SK-N-SH (cell line): ENCODE measurements at regions of chr18 and their contacts with region 1.

Region 1: DNA sequence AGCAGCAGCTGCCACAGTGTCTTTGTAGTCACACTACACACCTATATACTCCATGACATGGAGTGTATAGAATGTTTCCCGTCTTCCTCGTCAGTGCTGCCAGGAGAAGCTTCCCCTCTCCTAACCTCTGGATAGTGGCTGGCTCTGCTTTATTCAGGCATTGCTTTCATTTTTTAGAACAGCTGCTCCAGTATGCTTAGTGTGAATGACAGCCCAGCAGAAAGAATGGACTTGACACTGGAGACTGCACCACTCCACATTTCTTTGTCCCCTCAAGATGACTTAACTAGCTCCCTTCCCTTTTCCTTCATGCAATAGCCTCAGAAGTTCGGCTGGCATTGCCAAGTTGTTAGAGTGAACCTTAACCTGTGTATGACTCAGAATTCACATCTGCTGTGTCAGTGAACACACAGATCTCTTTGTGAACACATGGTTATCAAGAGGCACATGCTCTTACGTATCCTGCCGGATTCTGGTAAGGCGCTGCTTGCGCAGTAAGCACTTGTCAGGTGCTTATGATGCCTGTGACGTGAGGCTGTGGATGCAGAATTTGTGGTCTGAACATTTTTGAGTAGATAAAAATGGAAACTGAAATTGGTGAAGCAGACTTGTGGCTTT is 73.9 kb downstream of the NEDD4L start:
- DNase-seq: no peak
- H3K4me3 ChIP-seq: no peak overlapping the region
- H3K27ac ChIP-seq: no peak overlapping the region
- H3K4me1 ChIP-seq: peaks cover 0 to 15% of the 10 kb centered on the region in 2 experiments; a peak in 2 of 4 replicates
- H3K27me3 ChIP-seq: no peaks in the 10 kb centered on the region
- CTCF ChIP-seq: no peak
- EP300 ChIP-seq: no peak
- RAD21 ChIP-seq: no peak

Region 2: DNA sequence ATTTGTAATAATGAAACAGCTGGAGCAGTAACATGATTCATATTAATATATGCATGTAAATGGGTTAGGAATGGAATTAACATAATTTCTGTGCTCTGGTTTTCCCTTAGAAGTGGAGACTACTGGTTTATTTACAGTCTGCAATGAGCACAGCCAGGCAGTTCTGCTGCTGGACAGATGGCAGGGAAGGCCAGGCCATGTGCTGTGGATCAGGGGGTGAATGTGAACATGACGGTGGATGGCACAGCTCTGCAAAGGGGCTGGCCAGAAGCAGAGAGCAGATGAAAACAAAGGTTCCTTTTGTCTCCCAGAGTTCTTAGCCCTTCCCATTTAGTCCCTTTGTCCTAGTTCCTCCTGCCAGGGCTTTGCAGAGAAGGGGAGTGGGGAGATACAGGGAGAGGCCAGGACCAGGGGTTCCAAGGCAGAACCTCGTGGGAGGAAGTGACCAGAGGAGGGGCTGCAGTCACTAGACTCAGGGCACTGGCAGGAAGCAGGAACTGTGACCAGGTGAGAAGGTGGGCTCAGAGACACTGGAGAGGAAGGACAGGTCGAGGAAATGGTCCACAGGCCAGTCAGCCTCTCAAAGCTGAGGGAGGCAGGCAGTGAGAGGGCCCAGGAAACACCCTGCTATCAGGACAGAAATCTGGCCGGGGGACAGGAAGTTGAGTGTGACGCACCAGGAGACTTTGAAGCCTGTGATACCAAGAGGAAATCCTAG is 201.9 kb before region 1 on chr18:
- CTCF ChIA-PET with region 1: interaction called, 11 read pairs
- POLR2A ChIA-PET with region 1: no interaction called
- DNase-seq: peak; percentile 52
- H3K4me3 ChIP-seq: no peak overlapping the region
- H3K27ac ChIP-seq: peak overlapping the region in 1 of 2 experiments; percentile 51; a peak in 1 of 4 replicates
- H3K4me1 ChIP-seq: peaks cover 11 to 13% of the 10 kb centered on the region in 2 experiments; a peak in 3 of 4 replicates
- H3K27me3 ChIP-seq: no peaks in the 10 kb centered on the region
- CTCF ChIP-seq: no peak
- EP300 ChIP-seq: peak in 1 of 2 experiments; percentile 48; a peak in 1 of 4 replicates
- RAD21 ChIP-seq: no peak

Region 3: GRCh38 chr18:58038063-58038462 is 79.8 kb before region 1 on chr18:
- CTCF ChIA-PET with region 1: interaction called, 99 read pairs
- POLR2A ChIA-PET with region 1: no interaction called
- DNase-seq: no peak
- H3K4me3 ChIP-seq: no peak overlapping the region
- H3K27ac ChIP-seq: no peak overlapping the region
- H3K4me1 ChIP-seq: peaks cover 0 to 2% of the 10 kb centered on the region in 2 experiments; a peak in 1 of 4 replicates
- H3K27me3 ChIP-seq: peaks cover 11% of the 10 kb centered on the region; the same call in 1 of the 2 replicates
- CTCF ChIP-seq: no peak
- EP300 ChIP-seq: no peak
- RAD21 ChIP-seq: no peak

Region 4: GRCh38 chr18:58051765-58052460 is 66.0 kb before region 1 on chr18:
- CTCF ChIA-PET with region 1: interaction called, 37 read pairs
- POLR2A ChIA-PET with region 1: no interaction called
- DNase-seq: no peak
- H3K4me3 ChIP-seq: no peak overlapping the region
- H3K27ac ChIP-seq: no peak overlapping the region
- H3K4me1 ChIP-seq: peaks cover 2 to 8% of the 10 kb centered on the region in 2 experiments; a peak in 2 of 4 replicates
- H3K27me3 ChIP-seq: no peaks in the 10 kb centered on the region
- CTCF ChIP-seq: peak; percentile 55
- EP300 ChIP-seq: no peak
- RAD21 ChIP-seq: peak; percentile 62

Region 5: DNA sequence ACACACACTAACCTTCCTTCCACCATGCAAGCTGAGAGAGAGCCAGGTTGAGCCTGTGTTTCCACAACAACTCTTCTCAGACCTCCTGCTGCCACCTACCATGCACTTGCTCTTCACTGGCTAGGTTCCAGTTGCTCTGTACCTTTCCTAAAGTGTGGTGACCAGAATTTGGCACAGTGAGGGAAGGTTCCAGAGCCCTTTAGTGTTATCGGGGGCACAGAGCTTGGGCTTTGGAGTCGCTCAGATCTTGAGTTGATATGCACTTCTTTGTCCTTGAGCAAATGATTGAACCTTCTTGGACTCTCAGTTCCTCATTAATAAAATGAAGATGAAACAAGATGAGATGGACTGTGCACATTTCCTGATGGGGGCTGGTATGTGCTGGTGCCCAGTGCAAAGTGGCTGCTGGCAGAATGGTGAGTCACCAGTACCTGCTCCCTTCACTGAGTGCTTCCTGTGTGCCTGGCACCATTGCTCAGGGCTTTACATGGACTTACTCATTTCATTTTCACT is 26.7 kb before region 1 on chr18:
- CTCF ChIA-PET with region 1: interaction called, 10 read pairs
- POLR2A ChIA-PET with region 1: no interaction called
- DNase-seq: no peak
- H3K4me3 ChIP-seq: no peak overlapping the region
- H3K27ac ChIP-seq: no peak overlapping the region
- H3K4me1 ChIP-seq: no peaks in the 10 kb centered on the region
- H3K27me3 ChIP-seq: no peaks in the 10 kb centered on the region
- CTCF ChIP-seq: no peak
- EP300 ChIP-seq: no peak
- RAD21 ChIP-seq: no peak

Region 6: DNA sequence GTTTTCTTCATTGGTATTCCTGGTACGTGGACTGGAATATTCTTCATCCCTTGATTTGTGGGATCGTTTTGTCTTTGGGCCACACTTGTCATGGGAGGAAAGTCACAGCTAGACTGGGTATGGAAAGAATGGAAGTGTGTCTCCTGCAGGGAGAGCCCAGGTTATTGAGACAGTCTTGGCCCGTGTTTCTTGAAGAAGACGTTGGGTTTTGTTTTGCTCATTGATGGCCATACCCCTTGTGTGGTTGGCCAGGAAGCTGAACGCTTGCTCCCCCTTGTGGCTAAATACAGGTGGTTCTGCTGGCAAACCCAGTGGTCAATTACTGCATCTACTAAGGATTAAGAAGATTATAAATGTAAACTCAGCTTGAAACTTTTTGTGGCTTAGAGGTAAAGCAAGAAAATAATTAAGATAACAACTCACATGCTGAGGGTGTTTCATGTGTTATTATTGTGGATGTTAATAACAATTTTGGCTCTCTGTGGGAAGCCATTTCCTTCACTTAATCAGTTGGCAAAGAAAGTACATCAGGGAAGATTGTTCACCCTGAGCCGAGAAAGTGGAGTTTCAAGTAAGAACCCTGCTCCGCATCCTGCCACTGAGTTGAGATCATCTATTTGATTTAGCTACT is 17.9 kb after region 1 on chr18:
- CTCF ChIA-PET with region 1: interaction called, 51 read pairs
- POLR2A ChIA-PET with region 1: no interaction called
- DNase-seq: peak; percentile 76
- H3K4me3 ChIP-seq: peak overlapping the region in 1 of 2 experiments; percentile 5; a peak in 1 of 4 replicates
- H3K27ac ChIP-seq: no peak overlapping the region
- H3K4me1 ChIP-seq: no peaks in the 10 kb centered on the region; a peak in 1 of 4 replicates
- H3K27me3 ChIP-seq: no peaks in the 10 kb centered on the region
- CTCF ChIP-seq: peak; percentile 89
- EP300 ChIP-seq: no peak
- RAD21 ChIP-seq: peak; percentile 73

Region 7: GRCh38 chr18:58290116-58290695 is 172.3 kb after region 1 on chr18:
- CTCF ChIA-PET with region 1: no interaction called
- POLR2A ChIA-PET with region 1: no interaction called
- DNase-seq: no peak
- H3K4me3 ChIP-seq: no peak overlapping the region
- H3K27ac ChIP-seq: no peak overlapping the region
- H3K4me1 ChIP-seq: peaks cover 0 to 16% of the 10 kb centered on the region in 2 experiments; a peak in 1 of 4 replicates
- H3K27me3 ChIP-seq: no peaks in the 10 kb centered on the region
- CTCF ChIP-seq: no peak
- EP300 ChIP-seq: no peak
- RAD21 ChIP-seq: no peak